BJ (cell line): ENCODE measurements at regions of chr7 and their contacts with region 1.

Region 1: DNA sequence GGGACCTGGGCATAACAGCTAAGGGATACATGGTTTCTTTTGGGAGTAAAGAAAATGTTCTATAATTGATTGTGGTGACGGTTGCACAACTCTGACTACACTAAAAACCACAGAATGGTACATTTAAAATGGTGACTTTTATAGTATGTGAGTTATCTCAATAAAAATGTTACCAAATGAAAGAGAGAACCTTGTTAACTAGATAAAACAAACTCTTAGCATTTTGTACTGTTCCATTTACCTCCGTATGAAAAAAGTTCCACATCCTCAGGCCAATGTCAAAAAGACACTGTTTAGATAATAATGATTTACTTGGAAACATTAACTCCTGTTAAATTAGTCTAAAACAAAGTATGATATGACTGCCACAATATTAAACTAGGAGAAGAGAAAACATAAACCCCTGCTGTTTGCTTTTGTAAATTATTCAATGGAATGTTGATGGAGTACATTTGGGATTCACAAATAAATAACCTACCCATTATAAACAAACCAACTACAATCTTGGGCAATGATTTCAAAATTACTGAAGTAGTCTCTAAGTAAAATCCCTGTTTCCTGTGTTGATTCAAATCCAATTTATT is 60.7 kb downstream of the SMURF1 start:
- DNase-seq: peak; percentile 46
- H3K4me3 ChIP-seq: no peak overlapping the region
- H3K27me3 ChIP-seq: no peaks in the 10 kb centered on the region
- CTCF ChIP-seq: no peak

Region 2: DNA sequence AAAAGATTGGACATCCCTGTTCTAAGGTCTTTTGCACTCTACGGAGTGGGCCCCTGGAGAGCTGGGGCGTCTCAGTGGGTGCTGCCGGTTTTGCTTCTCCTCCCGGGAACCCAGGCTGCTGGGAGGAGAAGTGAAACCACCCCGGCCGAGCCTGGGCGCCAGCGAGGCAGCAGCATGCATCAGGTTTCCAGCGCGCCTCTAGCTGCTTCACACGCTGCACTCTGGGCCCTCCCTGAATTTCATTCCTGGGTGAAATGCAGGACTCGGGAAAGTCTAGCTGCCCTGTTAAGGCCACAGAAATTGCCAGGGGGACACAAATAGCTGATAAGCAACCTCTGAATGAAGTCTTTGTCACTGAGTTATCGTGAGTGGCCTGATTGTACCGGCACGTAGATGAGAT is 77.4 kb before region 1 on chr7:
- CTCF ChIA-PET with region 1: no interaction called
- POLR2A ChIA-PET with region 1: no interaction called
- DNase-seq: no peak
- H3K4me3 ChIP-seq: no peak overlapping the region
- H3K27me3 ChIP-seq: no peaks in the 10 kb centered on the region
- CTCF ChIP-seq: no peak

Region 3: DNA sequence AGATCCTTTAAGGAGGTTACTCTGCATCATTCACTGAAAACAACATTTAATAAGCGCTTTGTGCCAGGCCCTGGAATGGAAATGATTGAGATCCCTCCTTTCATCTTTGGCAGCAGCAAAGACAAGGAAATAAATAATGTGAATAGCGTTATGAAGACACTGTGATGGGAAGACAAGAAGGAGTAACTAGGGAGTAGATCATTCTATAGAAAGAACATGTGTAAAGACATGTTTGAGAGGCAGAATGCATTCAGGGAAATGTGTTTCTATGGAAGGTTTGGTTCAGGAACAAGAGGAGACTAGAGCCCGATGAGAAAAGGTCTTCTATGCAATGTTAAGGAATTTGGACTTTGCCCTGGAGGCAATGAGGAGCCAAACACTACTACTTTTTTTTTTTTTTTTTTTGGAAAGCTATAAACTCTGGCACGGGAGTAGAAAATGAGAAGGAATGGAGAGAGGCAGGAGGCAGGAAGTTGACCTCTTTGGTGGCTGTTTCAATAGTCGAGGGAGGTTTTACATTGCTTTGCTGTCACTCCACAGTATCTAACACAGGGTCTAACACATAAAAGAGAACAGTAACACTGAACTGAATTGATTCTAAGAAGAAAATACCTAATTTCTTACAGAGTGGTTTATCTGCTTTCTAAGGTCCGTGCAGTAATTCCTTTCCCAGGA is 15.8 kb after region 1 on chr7:
- CTCF ChIA-PET with region 1: no interaction called
- POLR2A ChIA-PET with region 1: no interaction called
- DNase-seq: no peak
- H3K4me3 ChIP-seq: no peak overlapping the region
- H3K27me3 ChIP-seq: no peaks in the 10 kb centered on the region
- CTCF ChIP-seq: no peak

Region 4: GRCh38 chr7:99120501-99120900 is 37.3 kb after region 1 on chr7:
- CTCF ChIA-PET with region 1: interaction called, 5 read pairs
- POLR2A ChIA-PET with region 1: interaction called, 11 read pairs
- DNase-seq: no peak
- H3K4me3 ChIP-seq: no peak overlapping the region
- H3K27me3 ChIP-seq: no peaks in the 10 kb centered on the region
- CTCF ChIP-seq: no peak

Region 5: GRCh38 chr7:99375070-99375807 is 292.1 kb after region 1 on chr7:
- CTCF ChIA-PET with region 1: no interaction called
- POLR2A ChIA-PET with region 1: interaction called, 12 read pairs
- DNase-seq: no peak
- H3K4me3 ChIP-seq: peak overlapping the region; percentile 94
- H3K27me3 ChIP-seq: no peaks in the 10 kb centered on the region
- CTCF ChIP-seq: no peak